K562 (cell line): ENCODE measurements at regions of chr19 and their contacts with region 1.

Region 1: GRCh38 chr19:51338563-51339312 is 3.2 kb downstream of the VSIG10L start:
- DNase-seq: peak; percentile 87 to 94 (median 91)
- ATAC-seq: peak; percentile 86
- H3K4me3 ChIP-seq: peak overlapping the region; percentile 67
- H3K27ac ChIP-seq: peak overlapping the region; percentile 76
- H3K4me1 ChIP-seq: peaks cover 26 to 41% of the 10 kb centered on the region in 2 experiments; a peak in 4 of 5 replicates
- H3K27me3 ChIP-seq: no peaks in the 10 kb centered on the region
- CTCF ChIP-seq: peak; percentile 87 to 95 (median 87)
- EP300 ChIP-seq: no peak
- POLR2A ChIP-seq: no peak
- RAD21 ChIP-seq: peak; percentile 84 to 85

Region 2: DNA sequence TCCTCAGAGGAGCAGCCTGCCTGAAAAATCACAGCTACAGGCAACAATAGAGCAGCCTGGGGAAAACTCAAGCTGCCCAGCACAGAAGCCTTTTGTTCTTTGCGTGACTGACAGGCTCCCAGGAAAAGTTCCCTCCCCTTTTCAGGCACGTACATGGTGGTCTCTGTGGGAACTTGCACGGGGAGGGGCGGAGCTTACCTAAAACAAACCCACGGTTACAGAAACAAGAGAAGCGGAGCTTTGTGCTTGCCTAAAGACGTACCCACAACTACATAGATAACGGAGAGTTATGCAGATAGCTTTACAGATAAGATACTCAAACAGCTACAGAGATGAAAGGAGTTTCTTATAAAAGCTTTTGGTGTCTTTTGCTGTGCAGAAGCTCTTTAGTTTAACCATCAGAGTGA is 16.0 kb after region 1 on chr19:
- CTCF ChIA-PET with region 1: no interaction called
- POLR2A ChIA-PET with region 1: interaction called, 22 read pairs
- in situ Hi-C with region 1: no loop called
- intact Hi-C with region 1: no loop called
- DNase-seq: no peak
- ATAC-seq: no peak
- H3K4me3 ChIP-seq: no peak overlapping the region
- H3K27ac ChIP-seq: peak overlapping the region; percentile 32; the same call in 1 of the 3 replicates
- H3K4me1 ChIP-seq: peaks cover 23 to 32% of the 10 kb centered on the region in 2 experiments
- H3K27me3 ChIP-seq: no peaks in the 10 kb centered on the region
- CTCF ChIP-seq: no peak
- EP300 ChIP-seq: no peak
- POLR2A ChIP-seq: no peak
- RAD21 ChIP-seq: no peak

Region 3: GRCh38 chr19:51393959-51394836 is 55.5 kb after region 1 on chr19:
- CTCF ChIA-PET with region 1: interaction called, 3 read pairs
- POLR2A ChIA-PET with region 1: interaction called, 10 read pairs
- in situ Hi-C with region 1: no loop called
- intact Hi-C with region 1: loop called (anchors 2 kb)
- DNase-seq: peak; percentile 93 to 99 (median 95)
- ATAC-seq: peak; percentile 92
- H3K4me3 ChIP-seq: peak overlapping the region; percentile 58
- H3K27ac ChIP-seq: peak overlapping the region; percentile 96
- H3K4me1 ChIP-seq: peaks cover 28 to 30% of the 10 kb centered on the region in 2 experiments; a peak in 4 of 5 replicates
- H3K27me3 ChIP-seq: no peaks in the 10 kb centered on the region
- CTCF ChIP-seq: peak in 2 of 3 experiments; percentile 23 to 36; a peak in 3 of 6 replicates
- EP300 ChIP-seq: peak; percentile 20; the same call in 1 of the 2 replicates
- POLR2A ChIP-seq: peak; percentile 79
- RAD21 ChIP-seq: no peak; a peak in 1 of 4 replicates

Region 4: DNA sequence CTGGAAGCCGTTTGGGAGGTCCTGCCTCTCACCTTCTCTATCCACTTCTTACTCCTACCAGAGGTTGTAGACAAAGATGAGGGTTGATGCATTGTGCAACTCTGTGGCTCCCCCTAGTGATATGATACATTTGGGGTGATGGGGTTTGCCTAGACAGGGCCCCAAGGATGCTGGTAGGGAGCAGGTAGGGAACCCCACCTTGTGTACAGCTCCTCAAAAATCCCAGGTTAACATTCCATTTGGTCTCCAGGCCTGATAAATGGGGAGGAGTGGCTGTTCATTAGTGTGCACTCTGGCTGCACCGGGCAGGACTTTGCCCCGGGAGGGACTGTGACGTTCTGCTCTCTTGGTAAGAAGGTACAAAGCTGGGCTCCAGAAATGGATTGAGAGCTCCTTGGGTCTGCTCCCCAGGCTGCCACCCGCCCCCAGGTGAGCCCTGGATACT is 100.3 kb after region 1 on chr19:
- CTCF ChIA-PET with region 1: no interaction called
- POLR2A ChIA-PET with region 1: no interaction called
- in situ Hi-C with region 1: no loop called
- intact Hi-C with region 1: loop called (anchors 1 kb)
- DNase-seq: peak in 3 of 4 experiments; percentile 34 to 51 (median 41)
- ATAC-seq: peak; percentile 43
- H3K4me3 ChIP-seq: no peak overlapping the region
- H3K27ac ChIP-seq: no peak overlapping the region
- H3K4me1 ChIP-seq: peaks cover 16 to 24% of the 10 kb centered on the region in 2 experiments
- H3K27me3 ChIP-seq: no peaks in the 10 kb centered on the region
- CTCF ChIP-seq: peak; percentile 55 to 76 (median 58)
- EP300 ChIP-seq: no peak
- POLR2A ChIP-seq: no peak
- RAD21 ChIP-seq: peak in 1 of 2 experiments; percentile 57; a peak in 2 of 4 replicates

Region 5: DNA sequence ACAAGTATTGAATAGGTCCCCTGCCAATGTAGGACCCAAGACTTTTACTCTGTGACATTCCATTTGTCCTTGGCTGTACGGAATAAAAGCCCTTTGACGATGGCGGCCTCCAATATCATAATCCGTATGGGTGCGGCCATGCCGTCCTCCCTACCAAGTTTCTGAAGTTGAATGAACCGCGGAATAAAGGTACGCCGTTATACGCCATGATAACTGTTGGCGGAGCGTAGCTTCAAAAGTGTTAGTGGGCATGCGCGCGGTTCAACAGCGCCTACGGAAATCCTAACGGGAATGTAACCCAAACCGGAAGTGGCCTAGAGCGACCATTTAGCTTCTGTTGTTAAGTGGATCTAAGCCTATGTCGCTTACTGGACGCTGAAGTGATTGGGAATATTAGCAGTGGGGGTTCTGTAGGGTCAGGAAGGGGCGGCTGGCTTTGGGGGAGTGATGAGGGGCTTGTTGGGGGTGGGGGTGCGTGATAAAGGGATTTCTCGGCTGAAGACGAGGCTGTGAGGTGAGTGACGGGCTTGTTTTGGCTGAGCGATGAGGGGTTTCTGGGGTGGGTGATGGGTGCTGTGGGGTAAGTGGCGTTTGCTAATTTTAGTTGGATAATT is 232.3 kb after region 1 on chr19 and contains the start of gene ZNF175:
- CTCF ChIA-PET with region 1: no interaction called
- POLR2A ChIA-PET with region 1: no interaction called
- in situ Hi-C with region 1: no loop called
- intact Hi-C with region 1: no loop called
- DNase-seq: peak; percentile 79 to 98 (median 82)
- ATAC-seq: peak; percentile 91
- H3K4me3 ChIP-seq: peak within 1 kb of the TSS; percentile 71
- H3K27ac ChIP-seq: peak within 1 kb of the TSS; percentile 76
- H3K4me1 ChIP-seq: peaks cover 14 to 54% of the 10 kb centered on the region in 2 experiments
- H3K27me3 ChIP-seq: no peaks in the 10 kb centered on the region
- CTCF ChIP-seq: no peak
- EP300 ChIP-seq: peak; percentile 43; the same call in 1 of the 2 replicates
- POLR2A ChIP-seq: peak; percentile 67
- RAD21 ChIP-seq: no peak
- polyA plus RNA-seq, gene ZNF175: 3.7 to 4.4 TPM

Region 6: DNA sequence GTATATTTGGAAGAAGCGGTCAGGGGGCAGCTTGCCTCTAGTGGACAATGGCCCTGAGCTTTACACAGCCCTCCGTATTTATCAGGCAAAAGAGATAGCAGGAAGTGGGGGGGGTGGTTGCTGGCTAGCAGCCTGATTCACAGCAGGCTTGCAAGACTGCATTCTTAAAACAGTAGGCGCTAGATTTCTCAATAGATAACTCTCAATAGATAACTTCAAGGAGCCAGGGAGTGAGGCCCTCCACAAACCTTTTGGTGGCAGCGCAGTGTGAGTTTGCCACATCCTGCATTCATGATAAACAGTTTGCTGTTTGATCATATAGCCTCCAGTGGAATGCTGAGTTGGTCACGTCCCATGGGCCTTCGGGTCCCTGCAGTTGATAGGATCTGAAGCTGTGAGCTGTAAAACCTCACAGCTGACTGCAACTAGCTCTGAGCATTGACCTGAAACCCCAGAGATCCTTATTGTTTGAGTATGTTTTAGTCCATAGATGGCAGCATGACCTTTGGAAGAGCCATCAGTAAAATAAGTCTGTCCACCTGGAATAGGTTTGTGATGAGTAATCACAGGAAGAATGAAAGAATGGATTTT is 468.5 kb after region 1 on chr19:
- CTCF ChIA-PET with region 1: no interaction called
- POLR2A ChIA-PET with region 1: no interaction called
- in situ Hi-C with region 1: no loop called
- intact Hi-C with region 1: loop called (anchors 5 kb)
- DNase-seq: peak; percentile 42 to 85 (median 52)
- ATAC-seq: peak; percentile 77
- H3K4me3 ChIP-seq: no peak overlapping the region
- H3K27ac ChIP-seq: peak overlapping the region; percentile 67
- H3K4me1 ChIP-seq: peaks cover 5 to 59% of the 10 kb centered on the region in 2 experiments; a peak in 4 of 5 replicates
- H3K27me3 ChIP-seq: no peaks in the 10 kb centered on the region
- CTCF ChIP-seq: peak in 2 of 3 experiments; percentile 18 to 41; a peak in 1 of 6 replicates
- EP300 ChIP-seq: peak; percentile 58
- POLR2A ChIP-seq: no peak
- RAD21 ChIP-seq: peak; percentile 24 to 31; a peak in 3 of 4 replicates